MCF 10A (cell line): ENCODE measurements at regions of chr3 and their contacts with region 1.

Region 1: DNA sequence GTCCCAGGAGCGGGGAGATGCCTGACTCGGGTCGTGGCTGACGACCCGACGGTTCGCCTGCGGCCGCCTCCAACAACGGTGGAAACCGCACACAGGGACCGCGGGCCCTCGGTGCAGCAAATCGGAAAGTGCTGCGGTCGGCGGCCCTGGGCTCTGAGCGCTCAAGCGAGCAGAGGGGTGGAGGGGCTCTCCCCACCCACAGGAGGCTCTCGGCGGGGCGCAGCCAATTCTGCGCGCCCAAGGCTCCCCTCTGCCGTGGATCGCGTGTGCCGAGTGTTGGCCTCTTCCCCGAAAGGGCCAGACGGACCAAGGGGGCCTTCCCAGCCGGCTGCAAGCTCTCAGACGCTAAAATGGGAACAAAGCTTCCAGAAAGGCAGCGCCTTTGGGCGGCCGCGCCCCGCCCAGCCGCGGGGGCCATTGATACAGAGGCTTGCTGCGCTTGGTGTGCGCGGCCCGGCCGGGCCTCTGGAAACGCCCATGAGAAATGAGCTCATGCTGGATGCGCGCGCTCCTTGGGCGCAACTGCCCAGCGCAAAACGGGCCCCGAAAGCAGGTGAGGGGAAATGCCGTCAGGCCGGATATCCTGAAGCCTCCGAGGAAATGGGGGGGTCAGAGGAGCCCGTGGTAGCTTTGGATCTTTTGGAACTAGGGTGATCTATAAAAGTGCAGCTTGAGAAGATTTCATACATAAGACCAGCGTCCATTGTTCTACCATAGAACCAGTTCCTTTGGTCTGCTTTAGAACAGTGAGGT is 1.2 kb upstream of the GSK3B start:
- DNase-seq: peak; percentile 94
- H3K4me3 Mint-ChIP-seq: no peak overlapping the region
- H3K27ac Mint-ChIP-seq: no peak overlapping the region
- H3K4me1 Mint-ChIP-seq: peaks cover 13% of the 10 kb centered on the region
- H3K27me3 Mint-ChIP-seq: no peaks in the 10 kb centered on the region
- CTCF ChIP-seq: no peak

Region 2: GRCh38 chr3:119463171-119464169 is 631.9 kb before region 1 on chr3 and contains the start of gene TMEM39A:
- CTCF ChIA-PET with region 1: no interaction called
- POLR2A ChIA-PET with region 1: interaction called, 14 read pairs
- intact Hi-C with region 1: no loop called
- DNase-seq: peak; percentile 98
- H3K4me3 Mint-ChIP-seq: peak within 1 kb of the TSS; percentile 89
- H3K27ac Mint-ChIP-seq: peak within 1 kb of the TSS; percentile 94
- H3K4me1 Mint-ChIP-seq: peaks cover 28% of the 10 kb centered on the region
- H3K27me3 Mint-ChIP-seq: no peaks in the 10 kb centered on the region
- CTCF ChIP-seq: no peak
- total RNA-seq, gene TMEM39A: 87.1 and 105 TPM in 2 replicates

Region 3: DNA sequence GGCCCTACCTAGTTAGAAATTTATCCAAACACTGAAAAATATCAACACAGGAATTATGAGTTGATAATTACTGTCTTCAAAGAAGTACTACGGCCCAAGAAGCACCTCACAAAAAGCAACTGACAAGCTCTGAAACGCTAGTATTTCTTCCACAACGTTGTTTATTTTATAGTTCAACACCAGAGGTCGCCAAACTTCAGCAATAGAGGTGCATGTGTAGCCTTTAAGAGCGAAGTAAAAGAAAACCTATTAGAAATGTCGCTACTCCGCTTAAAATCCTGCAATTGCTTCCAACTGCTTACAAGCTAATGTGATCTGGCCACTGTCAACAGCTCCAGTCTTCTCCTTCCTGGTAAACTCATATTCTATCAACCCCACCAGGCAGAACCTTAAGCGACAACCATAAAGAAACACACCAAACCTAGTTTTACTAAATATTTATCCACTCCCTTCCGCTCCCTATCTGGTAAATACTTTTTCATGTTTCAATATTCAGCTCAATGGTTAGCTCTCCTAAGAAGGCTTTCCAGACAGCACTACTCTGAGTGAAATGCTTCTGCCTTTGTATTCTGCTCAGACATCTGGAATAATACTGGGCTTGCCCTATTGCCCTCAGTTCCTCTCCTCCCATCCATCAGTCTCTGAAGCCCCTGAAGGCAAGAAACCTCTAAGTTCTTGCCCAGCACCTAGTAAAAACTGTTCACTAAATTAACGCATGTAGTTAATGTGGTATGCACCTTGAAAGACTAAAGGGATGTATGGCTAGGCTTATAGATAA is 203.3 kb before region 1 on chr3:
- CTCF ChIA-PET with region 1: interaction called, 8 read pairs
- POLR2A ChIA-PET with region 1: interaction called, 36 read pairs
- intact Hi-C with region 1: loop called (anchors 1 kb)
- DNase-seq: peak; percentile 75
- H3K4me3 Mint-ChIP-seq: no peak overlapping the region
- H3K27ac Mint-ChIP-seq: no peak overlapping the region
- H3K4me1 Mint-ChIP-seq: peaks cover 8% of the 10 kb centered on the region
- H3K27me3 Mint-ChIP-seq: no peaks in the 10 kb centered on the region
- CTCF ChIP-seq: peak; percentile 53

Region 4: GRCh38 chr3:120113128-120114116 is 18.0 kb after region 1 on chr3:
- CTCF ChIA-PET with region 1: interaction called, 5 read pairs
- POLR2A ChIA-PET with region 1: interaction called, 284 read pairs
- intact Hi-C with region 1: no loop called
- DNase-seq: peak; percentile 91
- H3K4me3 Mint-ChIP-seq: no peak overlapping the region
- H3K27ac Mint-ChIP-seq: peak overlapping the region; percentile 73
- H3K4me1 Mint-ChIP-seq: peaks cover 51% of the 10 kb centered on the region
- H3K27me3 Mint-ChIP-seq: no peaks in the 10 kb centered on the region
- CTCF ChIP-seq: no peak

Region 5: GRCh38 chr3:120153091-120153692 is 57.8 kb after region 1 on chr3:
- CTCF ChIA-PET with region 1: interaction called, 5 read pairs
- POLR2A ChIA-PET with region 1: interaction called, 88 read pairs
- intact Hi-C with region 1: no loop called
- DNase-seq: peak; percentile 80
- H3K4me3 Mint-ChIP-seq: no peak overlapping the region
- H3K27ac Mint-ChIP-seq: peak overlapping the region; percentile 46
- H3K4me1 Mint-ChIP-seq: peaks cover 19% of the 10 kb centered on the region
- H3K27me3 Mint-ChIP-seq: no peaks in the 10 kb centered on the region
- CTCF ChIP-seq: no peak

Region 6: GRCh38 chr3:120177151-120177550 is 81.7 kb after region 1 on chr3:
- CTCF ChIA-PET with region 1: interaction called, 11 read pairs
- POLR2A ChIA-PET with region 1: interaction called, 174 read pairs
- intact Hi-C with region 1: loop called (anchors 1 kb)
- DNase-seq: peak; percentile 93
- H3K4me3 Mint-ChIP-seq: peak overlapping the region; percentile 65
- H3K27ac Mint-ChIP-seq: peak overlapping the region; percentile 96
- H3K4me1 Mint-ChIP-seq: peaks cover 34% of the 10 kb centered on the region
- H3K27me3 Mint-ChIP-seq: no peaks in the 10 kb centered on the region
- CTCF ChIP-seq: no peak

Region 7: GRCh38 chr3:120218981-120219380 is 123.6 kb after region 1 on chr3:
- CTCF ChIA-PET with region 1: no interaction called
- POLR2A ChIA-PET with region 1: no interaction called
- intact Hi-C with region 1: no loop called
- DNase-seq: peak; percentile 30
- H3K4me3 Mint-ChIP-seq: no peak overlapping the region
- H3K27ac Mint-ChIP-seq: no peak overlapping the region
- H3K4me1 Mint-ChIP-seq: peaks cover 3% of the 10 kb centered on the region
- H3K27me3 Mint-ChIP-seq: no peaks in the 10 kb centered on the region
- CTCF ChIP-seq: no peak

Region 8: GRCh38 chr3:120311863-120312794 is 216.7 kb after region 1 on chr3:
- CTCF ChIA-PET with region 1: no interaction called
- POLR2A ChIA-PET with region 1: no interaction called
- intact Hi-C with region 1: no loop called
- DNase-seq: no peak
- H3K4me3 Mint-ChIP-seq: no peak overlapping the region
- H3K27ac Mint-ChIP-seq: no peak overlapping the region
- H3K4me1 Mint-ChIP-seq: peaks cover 5% of the 10 kb centered on the region
- H3K27me3 Mint-ChIP-seq: no peaks in the 10 kb centered on the region
- CTCF ChIP-seq: no peak

Region 9: GRCh38 chr3:120348981-120349818 is 253.8 kb after region 1 on chr3 and contains the start of gene LRRC58:
- CTCF ChIA-PET with region 1: interaction called, 5 read pairs
- POLR2A ChIA-PET with region 1: interaction called, 37 read pairs
- intact Hi-C with region 1: loop called (anchors 10 kb)
- DNase-seq: peak; percentile 95
- H3K4me3 Mint-ChIP-seq: peak within 1 kb of the TSS; percentile 77
- H3K27ac Mint-ChIP-seq: peak within 1 kb of the TSS; percentile 83
- H3K4me1 Mint-ChIP-seq: peaks cover 34% of the 10 kb centered on the region
- H3K27me3 Mint-ChIP-seq: no peaks in the 10 kb centered on the region
- CTCF ChIP-seq: peak; percentile 8
- total RNA-seq, gene LRRC58: 25.8 and 28.8 TPM in 2 replicates